Common myeloid progenitor, CD34-positive (primary cell): ENCODE measurements at regions of chr12 and their contacts with region 1.

Region 1: GRCh38 chr12:113980537-113981337 is 14.6 kb upstream of the RBM19 start:
- DNase-seq: peak; percentile 65 to 83 (median 75)
- H3K4me3 ChIP-seq: no peak overlapping the region
- H3K27ac ChIP-seq: no peak overlapping the region
- H3K4me1 ChIP-seq: no peaks in the 10 kb centered on the region
- H3K27me3 ChIP-seq: peaks cover 0 to 19% (median 10%) of the 10 kb centered on the region in 5 experiments

Region 2: GRCh38 chr12:113912760-113913329 is 67.9 kb before region 1 on chr12:
- CTCF ChIA-PET with region 1: no interaction called
- POLR2A ChIA-PET with region 1: no interaction called
- DNase-seq: peak; percentile 52 to 71 (median 60)
- H3K4me3 ChIP-seq: no peak overlapping the region
- H3K27ac ChIP-seq: no peak overlapping the region
- H3K4me1 ChIP-seq: no peaks in the 10 kb centered on the region
- H3K27me3 ChIP-seq: no peaks in the 10 kb centered on the region

Region 3: GRCh38 chr12:113965951-113966797 is 14.6 kb before region 1 on chr12 and contains the start of gene RBM19:
- CTCF ChIA-PET with region 1: interaction called, 13 read pairs
- POLR2A ChIA-PET with region 1: no interaction called
- DNase-seq: peak; percentile 96 to 99 (median 97)
- H3K4me3 ChIP-seq: peak within 1 kb of the TSS; percentile 70 to 98 (median 96)
- H3K27ac ChIP-seq: peak within 1 kb of the TSS; percentile 35 to 80
- H3K4me1 ChIP-seq: peaks cover 7 to 22% (median 18%) of the 10 kb centered on the region in 4 experiments
- H3K27me3 ChIP-seq: peaks cover 0 to 3% (median 0%) of the 10 kb centered on the region in 5 experiments

Region 4: GRCh38 chr12:114006482-114007425 is 26.0 kb after region 1 on chr12:
- CTCF ChIA-PET with region 1: no interaction called
- POLR2A ChIA-PET with region 1: no interaction called
- DNase-seq: no peak
- H3K4me3 ChIP-seq: no peak overlapping the region
- H3K27ac ChIP-seq: no peak overlapping the region
- H3K4me1 ChIP-seq: no peaks in the 10 kb centered on the region
- H3K27me3 ChIP-seq: peaks cover 0 to 50% (median 12%) of the 10 kb centered on the region in 5 experiments

Region 5: DNA sequence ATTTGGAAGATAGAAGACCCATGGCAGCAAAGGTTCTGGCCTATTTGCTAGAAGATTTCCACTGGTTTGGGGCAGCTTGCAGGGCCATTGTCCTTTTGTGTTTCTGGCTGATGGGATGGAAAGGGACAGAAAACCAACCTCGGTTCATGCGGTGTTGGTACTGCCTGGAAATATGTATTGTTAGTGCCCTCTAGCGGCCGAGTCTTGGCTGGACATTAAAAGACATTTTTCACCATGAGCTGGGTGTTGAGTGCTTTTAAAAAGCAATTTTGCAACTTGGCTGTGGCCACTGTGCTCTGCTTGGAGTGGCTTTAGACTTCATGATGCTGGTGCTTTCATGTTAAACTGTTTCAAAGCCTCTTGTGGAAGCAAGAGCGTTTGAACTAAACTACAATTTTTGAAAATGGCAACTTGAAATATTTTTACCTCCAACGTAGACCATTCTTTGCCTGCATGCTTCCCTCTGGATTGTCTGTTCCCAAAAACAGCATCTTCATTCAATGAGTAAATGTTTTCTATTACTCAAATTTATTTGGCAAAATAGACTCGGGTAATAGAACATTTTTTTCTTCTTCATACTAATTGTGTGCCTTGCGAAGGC is 527.9 kb after region 1 on chr12:
- CTCF ChIA-PET with region 1: interaction called, 34 read pairs
- POLR2A ChIA-PET with region 1: no interaction called
- DNase-seq: peak; percentile 57 to 80 (median 70)
- H3K4me3 ChIP-seq: no peak overlapping the region
- H3K27ac ChIP-seq: no peak overlapping the region
- H3K4me1 ChIP-seq: no peaks in the 10 kb centered on the region
- H3K27me3 ChIP-seq: peaks cover 2 to 22% (median 11%) of the 10 kb centered on the region in 5 experiments

Region 6: DNA sequence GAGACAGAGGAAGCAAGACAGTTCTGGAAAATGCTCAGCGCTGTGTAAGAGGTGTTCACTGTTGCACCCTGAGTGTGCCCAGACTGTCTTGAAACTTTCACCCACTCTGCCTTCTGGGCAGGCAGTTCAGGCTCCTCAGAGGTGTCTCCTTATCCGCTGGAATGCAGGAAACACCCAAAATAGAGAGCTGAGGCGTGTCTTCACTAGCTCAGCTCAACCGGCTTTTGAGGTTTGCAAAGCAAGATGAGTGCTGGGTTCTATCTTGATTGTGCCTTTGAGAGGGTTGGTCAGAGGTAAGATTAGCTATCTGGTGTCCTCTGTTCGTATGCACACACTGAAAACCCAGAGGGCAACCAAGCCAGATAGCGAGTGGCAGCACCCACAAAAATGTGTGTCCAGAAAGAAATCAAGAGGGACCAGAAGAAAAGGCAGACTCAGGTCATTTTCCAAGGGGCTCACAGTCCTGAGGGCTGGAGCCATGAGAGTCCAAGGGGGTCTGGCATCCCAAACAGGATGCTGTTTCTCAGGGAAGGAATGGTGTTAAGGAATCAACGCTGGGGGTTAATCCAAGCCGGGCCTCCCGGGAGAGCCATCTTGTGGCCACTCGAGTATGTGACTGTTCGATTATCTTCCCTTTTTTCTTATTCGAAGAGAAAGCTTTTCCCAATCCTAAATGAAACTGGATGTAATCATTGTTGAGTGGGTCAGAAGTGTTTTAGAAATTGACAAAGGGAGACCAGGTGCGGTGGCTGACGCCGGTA is 656.2 kb after region 1 on chr12:
- CTCF ChIA-PET with region 1: interaction called, 12 read pairs
- POLR2A ChIA-PET with region 1: no interaction called
- DNase-seq: no peak
- H3K4me3 ChIP-seq: no peak overlapping the region
- H3K27ac ChIP-seq: no peak overlapping the region
- H3K4me1 ChIP-seq: no peaks in the 10 kb centered on the region
- H3K27me3 ChIP-seq: peaks cover 0 to 2% (median 0%) of the 10 kb centered on the region in 5 experiments